CD4-positive, alpha-beta T cell (primary cell): ENCODE measurements at regions of chr3 and their contacts with region 1.

Region 1: GRCh38 chr3:118943597-118943996 is 91.0 kb downstream of the IGSF11 start:
- DNase-seq: no peak
- ATAC-seq: no peak
- H3K4me3 ChIP-seq: no peak overlapping the region
- H3K4me3 Mint-ChIP-seq: no peak overlapping the region
- H3K27ac ChIP-seq: no peak overlapping the region
- H3K27ac Mint-ChIP-seq: peak overlapping the region; percentile 49
- H3K4me1 ChIP-seq: peaks cover 11% of the 10 kb centered on the region
- H3K4me1 Mint-ChIP-seq: peaks cover 59% of the 10 kb centered on the region
- H3K27me3 ChIP-seq: no peaks in the 10 kb centered on the region
- H3K27me3 Mint-ChIP-seq: no peaks in the 10 kb centered on the region
- CTCF ChIP-seq: no peak

Region 2: GRCh38 chr3:118955914-118956556 is 12.4 kb after region 1 on chr3:
- CTCF ChIA-PET with region 1: no interaction called
- POLR2A ChIA-PET with region 1: interaction called, 12 read pairs
- intact Hi-C with region 1: no loop called
- DNase-seq: peak in 3 of 14 experiments; percentile 52 to 63 (median 62)
- ATAC-seq: peak; percentile 85
- H3K4me3 ChIP-seq: no peak overlapping the region
- H3K4me3 Mint-ChIP-seq: peak overlapping the region; percentile 16
- H3K27ac ChIP-seq: peak overlapping the region in 1 of 2 donors; percentile 4
- H3K27ac Mint-ChIP-seq: peak overlapping the region; percentile 79
- H3K4me1 ChIP-seq: peaks cover 26% of the 10 kb centered on the region
- H3K4me1 Mint-ChIP-seq: peaks cover 55% of the 10 kb centered on the region
- H3K27me3 ChIP-seq: no peaks in the 10 kb centered on the region
- H3K27me3 Mint-ChIP-seq: no peaks in the 10 kb centered on the region
- CTCF ChIP-seq: no peak

Region 3: DNA sequence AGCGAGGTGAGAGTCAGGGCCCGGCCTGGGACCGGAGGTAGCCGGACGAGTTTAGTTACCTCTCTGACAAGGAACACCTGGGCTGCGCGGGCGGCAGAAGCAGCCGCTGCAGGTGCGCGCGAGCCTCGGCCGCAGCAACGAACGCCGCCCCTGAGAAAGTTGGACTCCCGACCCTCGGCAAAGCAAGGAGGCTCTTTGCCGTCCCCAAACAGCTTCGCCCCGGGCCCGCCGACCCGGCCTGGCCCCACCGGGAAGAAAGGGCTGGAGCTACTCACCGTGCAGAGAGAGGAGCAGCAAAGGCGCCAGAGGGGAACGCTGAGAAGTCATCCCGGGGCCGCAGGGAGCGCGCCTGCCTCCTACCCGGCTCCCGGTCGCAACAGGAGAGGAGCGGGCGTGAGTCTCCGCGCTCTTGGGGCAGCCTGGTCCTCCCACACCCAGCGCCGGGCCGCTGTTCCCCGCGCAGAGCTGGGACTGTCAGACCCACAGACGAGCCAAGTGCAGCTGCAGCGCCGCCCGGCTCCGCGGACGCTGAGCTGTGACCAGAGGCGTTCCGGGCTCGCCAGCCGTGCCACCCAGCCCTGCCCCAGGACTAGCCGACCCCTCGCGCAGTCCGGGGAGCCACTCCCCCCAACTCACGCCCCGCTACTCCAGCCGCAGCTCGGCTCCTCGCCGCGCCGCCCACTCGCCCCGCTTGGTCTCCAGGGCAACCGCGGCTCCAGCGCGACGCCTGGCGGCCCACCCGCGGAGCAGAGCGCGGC is 90.8 kb after region 1 on chr3 and contains the start of gene IGSF11:
- CTCF ChIA-PET with region 1: no interaction called
- POLR2A ChIA-PET with region 1: no interaction called
- intact Hi-C with region 1: loop called in 1 of 2 experiments (anchors 10 kb)
- DNase-seq: peak; percentile 42 to 81 (median 60)
- ATAC-seq: peak; percentile 92
- H3K4me3 ChIP-seq: peak within 1 kb of the TSS; percentile 64
- H3K4me3 Mint-ChIP-seq: peak within 1 kb of the TSS; percentile 91
- H3K27ac ChIP-seq: no peak within 1 kb of the TSS
- H3K27ac Mint-ChIP-seq: no peak within 1 kb of the TSS
- H3K4me1 ChIP-seq: peaks cover 11% of the 10 kb centered on the region
- H3K4me1 Mint-ChIP-seq: peaks cover 5% of the 10 kb centered on the region
- H3K27me3 ChIP-seq: peaks cover 9 to 27% of the 10 kb centered on the region in 2 experiments
- H3K27me3 Mint-ChIP-seq: peaks cover 49% of the 10 kb centered on the region
- CTCF ChIP-seq: peak; percentile 47
- total RNA-seq, gene IGSF11: 0.53 to 0.58 TPM